Activated T-helper 1 cell treated with anti-CD3 and anti-CD28 coated beads, Interleukin-12 subunit alpha, Interleukin-12 subunit beta, Interleukin-2, Interleukin-4 antibody, amounts not matched to agents 30 ng/mL and 10 ng/mL and 1 ng/mL, durations not matched to agents 14 hours and 24 hours and 36 hours (primary cell): ENCODE measurements at regions of chrX and their contacts with region 1.

Region 1: DNA sequence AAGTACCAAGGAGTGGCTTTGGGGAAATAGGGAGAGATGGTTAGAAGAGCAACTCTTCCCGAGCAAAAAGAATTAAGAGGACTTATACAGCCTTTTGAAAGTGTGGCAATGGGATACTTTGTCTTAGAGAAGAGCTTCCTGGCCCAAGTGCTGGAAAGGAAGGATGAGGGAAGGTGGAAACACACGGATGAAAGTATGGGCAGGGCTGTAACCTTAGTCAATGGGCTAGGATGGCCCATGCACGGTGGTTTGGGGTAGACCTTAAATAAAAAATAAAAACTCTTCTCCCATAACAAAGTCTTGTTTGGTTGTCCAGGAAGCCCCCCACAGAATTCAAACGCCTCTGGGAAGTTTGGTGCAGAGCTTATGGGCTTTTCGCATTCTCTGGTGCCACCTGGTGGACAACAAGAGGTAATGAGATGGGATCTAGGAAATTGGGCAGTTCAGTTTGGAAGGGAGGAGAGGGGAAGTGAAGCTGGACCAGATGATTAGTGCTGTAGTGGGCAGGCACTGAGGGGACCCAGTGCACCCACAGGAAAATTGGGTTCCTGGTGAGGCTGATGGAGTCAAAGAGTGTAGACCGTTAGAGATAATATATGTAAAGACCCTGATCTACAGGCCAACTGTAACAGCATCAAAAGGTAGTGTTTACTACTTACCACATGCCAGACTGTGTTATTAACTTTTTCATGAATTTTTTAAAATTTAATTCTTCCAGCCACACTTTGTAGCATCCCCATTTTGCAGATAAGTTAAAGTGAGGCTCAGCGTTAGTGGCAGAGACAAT is 13.8 kb upstream of the ENOX2 start:
- DNase-seq: no peak
- H3K4me3 Mint-ChIP-seq: no peak overlapping the region
- H3K27ac Mint-ChIP-seq: no peak overlapping the region
- H3K4me1 Mint-ChIP-seq: no peaks in the 10 kb centered on the region
- H3K27me3 Mint-ChIP-seq: no peaks in the 10 kb centered on the region

Region 2: DNA sequence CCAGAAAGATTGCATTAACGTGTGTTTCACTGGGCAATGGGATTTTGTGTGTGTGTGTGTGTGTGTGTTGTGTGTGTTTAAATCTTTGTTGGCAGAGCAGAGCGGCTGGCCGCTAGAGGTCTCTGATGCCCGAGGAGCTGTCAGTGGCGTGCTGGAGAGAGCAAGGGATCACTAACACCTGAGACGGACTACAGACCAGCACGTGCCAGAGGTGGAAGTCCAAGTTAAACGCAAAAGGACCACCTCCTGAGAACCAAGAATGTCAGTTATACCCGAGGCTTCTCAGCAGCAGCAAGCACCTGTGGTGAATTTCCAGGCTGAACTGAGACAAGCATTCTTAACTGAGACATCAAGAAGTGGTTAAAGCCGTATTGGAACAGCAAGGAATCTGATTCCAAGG is 586.1 kb before region 1 on chrX:
- intact Hi-C with region 1: loop called (anchors 1 kb)
- DNase-seq: no peak
- H3K4me3 Mint-ChIP-seq: no peak overlapping the region
- H3K27ac Mint-ChIP-seq: no peak overlapping the region
- H3K4me1 Mint-ChIP-seq: no peaks in the 10 kb centered on the region
- H3K27me3 Mint-ChIP-seq: peaks cover 9% of the 10 kb centered on the region

Region 3: GRCh38 chrX:130393451-130394074 is 523.3 kb before region 1 on chrX:
- intact Hi-C with region 1: loop called (anchors 5 kb)
- DNase-seq: no peak
- H3K4me3 Mint-ChIP-seq: no peak overlapping the region
- H3K27ac Mint-ChIP-seq: no peak overlapping the region
- H3K4me1 Mint-ChIP-seq: no peaks in the 10 kb centered on the region
- H3K27me3 Mint-ChIP-seq: peaks cover 16% of the 10 kb centered on the region

Region 4: DNA sequence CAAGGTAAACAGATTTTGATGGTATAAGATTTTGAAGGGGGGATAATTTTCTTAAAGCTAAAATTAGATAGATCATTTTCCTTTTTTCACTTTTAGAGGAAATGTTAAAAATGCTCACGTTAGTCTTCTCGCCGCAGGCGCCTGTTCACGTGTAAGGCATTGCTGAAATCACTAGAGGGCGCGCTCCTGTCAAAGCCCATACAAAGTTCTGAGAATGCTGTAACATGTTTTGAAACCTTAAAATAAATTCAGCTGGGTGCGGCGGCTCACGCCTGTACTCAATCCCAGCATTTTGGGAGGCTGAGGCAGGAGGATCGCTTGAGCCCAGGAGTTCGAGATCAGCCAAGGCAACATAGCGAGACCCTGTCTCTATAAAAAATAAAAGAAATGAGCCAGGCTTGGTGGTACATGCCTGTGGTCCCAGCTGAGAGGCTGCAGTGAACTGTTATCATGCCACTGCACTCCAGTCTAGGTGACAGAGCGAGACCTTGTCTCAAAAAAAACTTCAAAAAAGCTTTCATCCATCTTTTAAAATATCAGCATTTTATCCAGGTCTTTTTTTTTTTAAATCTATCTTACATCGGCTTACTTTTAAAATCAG is 377.0 kb before region 1 on chrX:
- intact Hi-C with region 1: loop called (anchors 1 kb)
- DNase-seq: peak; percentile 1
- H3K4me3 Mint-ChIP-seq: no peak overlapping the region
- H3K27ac Mint-ChIP-seq: no peak overlapping the region
- H3K4me1 Mint-ChIP-seq: no peaks in the 10 kb centered on the region
- H3K27me3 Mint-ChIP-seq: peaks cover 2% of the 10 kb centered on the region

Region 5: GRCh38 chrX:130575831-130576389 is 340.9 kb before region 1 on chrX:
- intact Hi-C with region 1: loop called (anchors 1 kb)
- DNase-seq: no peak
- H3K4me3 Mint-ChIP-seq: no peak overlapping the region
- H3K27ac Mint-ChIP-seq: no peak overlapping the region
- H3K4me1 Mint-ChIP-seq: no peaks in the 10 kb centered on the region
- H3K27me3 Mint-ChIP-seq: peaks cover 4% of the 10 kb centered on the region

Region 6: GRCh38 chrX:131139072-131139471 is 222.2 kb after region 1 on chrX:
- intact Hi-C with region 1: no loop called
- DNase-seq: no peak
- H3K4me3 Mint-ChIP-seq: no peak overlapping the region
- H3K27ac Mint-ChIP-seq: no peak overlapping the region
- H3K4me1 Mint-ChIP-seq: no peaks in the 10 kb centered on the region
- H3K27me3 Mint-ChIP-seq: no peaks in the 10 kb centered on the region